PC-9 (cell line): ENCODE measurements at regions of chr12 and their contacts with region 1.

Region 1: GRCh38 chr12:47367912-47368537 is 288.3 kb upstream of the AMIGO2 start:
- DNase-seq: no peak
- H3K4me3 ChIP-seq: no peak overlapping the region
- H3K27ac ChIP-seq: no peak overlapping the region
- H3K4me1 ChIP-seq: peaks cover 24% of the 10 kb centered on the region
- H3K27me3 ChIP-seq: no peaks in the 10 kb centered on the region
- CTCF ChIP-seq: no peak

Region 2: DNA sequence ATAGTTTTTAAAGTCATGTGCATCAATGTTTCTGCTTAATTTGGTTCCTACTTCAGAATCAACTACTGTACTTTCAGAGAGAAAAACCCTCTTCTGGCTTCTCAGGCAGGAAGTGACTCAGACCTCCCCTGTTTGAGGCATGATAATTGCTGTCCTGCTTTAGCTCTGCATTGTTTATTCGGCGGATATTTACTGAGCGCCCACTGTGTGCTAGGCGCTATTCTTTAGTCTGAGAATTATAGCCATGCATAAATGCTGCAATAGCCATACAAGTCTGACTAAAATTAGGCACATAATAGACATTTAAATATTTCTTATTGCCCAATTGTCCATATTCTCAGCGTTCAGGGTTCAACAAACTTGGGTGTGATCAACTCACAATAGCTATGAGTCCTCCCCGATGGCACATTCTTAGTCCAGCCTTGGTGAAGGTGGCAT is 282.2 kb before region 1 on chr12:
- CTCF ChIA-PET with region 1: interaction called, 18 read pairs
- POLR2A ChIA-PET with region 1: no interaction called
- intact Hi-C with region 1: no loop called
- DNase-seq: no peak
- H3K4me3 ChIP-seq: no peak overlapping the region
- H3K27ac ChIP-seq: no peak overlapping the region
- H3K4me1 ChIP-seq: peaks cover 37% of the 10 kb centered on the region
- H3K27me3 ChIP-seq: no peaks in the 10 kb centered on the region
- CTCF ChIP-seq: no peak

Region 3: GRCh38 chr12:47616440-47616839 is 248.4 kb after region 1 on chr12:
- CTCF ChIA-PET with region 1: no interaction called
- POLR2A ChIA-PET with region 1: no interaction called
- intact Hi-C with region 1: no loop called
- DNase-seq: no peak
- H3K4me3 ChIP-seq: no peak overlapping the region
- H3K27ac ChIP-seq: no peak overlapping the region
- H3K4me1 ChIP-seq: no peaks in the 10 kb centered on the region
- H3K27me3 ChIP-seq: no peaks in the 10 kb centered on the region
- CTCF ChIP-seq: no peak